ENCODE measurements at regions of chr3 and their contacts with region 1.

Region 1: DNA sequence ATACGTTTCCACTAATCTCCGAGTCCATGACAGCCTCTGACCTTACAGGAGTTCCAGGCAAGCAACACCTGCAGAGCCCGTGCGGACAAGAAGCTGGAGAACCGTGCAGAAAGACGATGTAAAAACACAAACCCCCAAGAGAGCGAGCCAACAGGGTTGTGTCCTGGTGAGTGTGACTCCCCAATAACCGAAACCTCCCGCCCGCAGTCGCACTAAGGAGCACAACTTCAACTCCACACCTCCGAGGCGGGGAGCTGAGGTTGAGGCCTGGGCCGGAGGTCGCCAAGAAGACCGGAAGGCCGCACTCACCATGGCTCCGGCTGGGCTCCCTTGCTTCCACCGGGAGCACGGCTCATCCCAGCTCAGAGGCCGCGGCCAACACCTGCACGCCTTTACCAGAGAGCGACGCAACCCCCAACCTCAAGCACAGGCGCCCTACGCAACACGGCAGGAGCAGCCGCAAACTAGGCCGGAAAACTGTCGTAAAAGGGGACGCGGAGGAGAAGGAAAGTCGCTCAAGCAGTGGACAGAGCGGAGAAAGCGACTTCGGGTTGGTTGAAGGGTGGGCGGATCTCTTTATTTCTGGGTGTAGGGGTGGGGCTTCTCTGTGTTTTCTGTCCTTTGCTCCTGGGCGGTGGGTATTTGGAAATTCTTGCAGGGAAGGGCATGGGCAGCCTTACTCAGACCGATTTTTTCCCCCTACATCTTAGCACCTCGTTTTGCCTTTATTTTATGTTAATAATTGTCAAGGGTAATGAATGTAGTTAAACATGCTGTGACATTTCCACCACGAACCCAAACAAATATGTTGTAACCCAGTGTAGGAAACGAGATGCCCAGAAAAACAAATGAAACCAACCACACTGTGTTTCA is at the start of gene DNAJC19:
- DNase-seq: peak; percentile 94 to 97
- H3K4me3 ChIP-seq: peak within 1 kb of the TSS; percentile 60 to 91
- H3K27ac ChIP-seq: peak within 1 kb of the TSS; percentile 73 to 95
- H3K4me1 ChIP-seq: peaks cover 0 to 27% (median 14%) of the 10 kb centered on the region in 4 donors
- H3K27me3 ChIP-seq: no peaks in the 10 kb centered on the region
- CTCF ChIP-seq: no peak

Region 2: DNA sequence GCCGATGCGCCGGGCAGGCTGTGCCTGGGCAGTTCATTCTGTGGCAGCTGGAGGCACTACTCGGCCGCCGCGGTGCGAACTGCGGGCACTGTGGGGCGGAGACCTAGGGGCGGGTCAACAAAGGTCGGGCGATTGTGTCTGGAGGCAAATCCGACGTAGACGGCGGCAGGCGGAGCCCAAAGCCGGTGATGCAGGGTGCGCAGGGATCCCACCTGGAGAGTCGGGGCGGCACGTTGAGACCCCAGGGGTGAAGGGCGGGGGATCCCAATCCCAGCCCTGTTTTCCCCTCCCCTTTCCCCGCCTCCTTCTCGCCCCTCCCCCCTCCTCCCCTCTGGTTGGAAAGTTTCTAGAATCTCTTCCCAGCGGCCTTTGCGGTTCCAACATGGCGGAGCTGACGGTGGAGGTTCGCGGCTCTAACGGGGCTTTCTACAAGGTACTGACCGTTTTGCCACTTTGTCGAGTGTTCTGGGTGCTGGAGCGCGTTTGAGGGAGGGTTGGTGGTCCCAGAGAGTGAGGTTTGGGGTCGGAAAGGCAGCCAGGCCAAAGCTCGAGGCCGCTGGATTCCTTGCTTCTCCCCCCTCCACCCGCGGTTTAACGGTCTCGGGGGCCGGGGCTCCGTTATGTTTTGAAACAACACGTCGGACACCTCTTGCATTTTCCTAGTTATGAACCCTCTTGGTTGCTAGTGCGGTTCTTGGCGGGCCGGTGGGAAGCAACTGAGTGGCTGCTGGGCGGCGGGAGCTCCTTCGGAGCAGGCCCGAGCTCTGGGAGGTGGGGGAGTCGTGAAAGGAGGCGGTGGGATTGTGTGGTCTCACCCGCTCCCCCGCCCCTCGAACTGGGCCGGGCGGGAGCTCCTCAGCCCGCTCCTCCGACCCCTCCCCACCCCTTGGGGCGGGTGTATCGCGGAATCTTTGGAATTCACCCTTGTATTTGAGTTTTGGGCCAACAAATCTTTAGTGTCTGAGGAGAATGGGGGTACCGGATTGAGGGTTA is 76.9 kb before region 1 on chr3 and contains the start of gene FXR1:
- intact Hi-C with region 1: loop called (anchors 5 kb)
- DNase-seq: peak; percentile 87 to 93
- H3K4me3 ChIP-seq: peak within 1 kb of the TSS; percentile 91 to 95
- H3K27ac ChIP-seq: peak within 1 kb of the TSS; percentile 91 to 94
- H3K4me1 ChIP-seq: peaks cover 0 to 35% (median 14%) of the 10 kb centered on the region in 4 donors
- H3K27me3 ChIP-seq: no peaks in the 10 kb centered on the region
- CTCF ChIP-seq: peak; percentile 70 to 91

Measured in tibial artery (tissue), 4 donors.